Gastrocnemius medialis (tissue), 4 donors: ENCODE measurements at regions of chr9 and their contacts with region 1.

Region 1: DNA sequence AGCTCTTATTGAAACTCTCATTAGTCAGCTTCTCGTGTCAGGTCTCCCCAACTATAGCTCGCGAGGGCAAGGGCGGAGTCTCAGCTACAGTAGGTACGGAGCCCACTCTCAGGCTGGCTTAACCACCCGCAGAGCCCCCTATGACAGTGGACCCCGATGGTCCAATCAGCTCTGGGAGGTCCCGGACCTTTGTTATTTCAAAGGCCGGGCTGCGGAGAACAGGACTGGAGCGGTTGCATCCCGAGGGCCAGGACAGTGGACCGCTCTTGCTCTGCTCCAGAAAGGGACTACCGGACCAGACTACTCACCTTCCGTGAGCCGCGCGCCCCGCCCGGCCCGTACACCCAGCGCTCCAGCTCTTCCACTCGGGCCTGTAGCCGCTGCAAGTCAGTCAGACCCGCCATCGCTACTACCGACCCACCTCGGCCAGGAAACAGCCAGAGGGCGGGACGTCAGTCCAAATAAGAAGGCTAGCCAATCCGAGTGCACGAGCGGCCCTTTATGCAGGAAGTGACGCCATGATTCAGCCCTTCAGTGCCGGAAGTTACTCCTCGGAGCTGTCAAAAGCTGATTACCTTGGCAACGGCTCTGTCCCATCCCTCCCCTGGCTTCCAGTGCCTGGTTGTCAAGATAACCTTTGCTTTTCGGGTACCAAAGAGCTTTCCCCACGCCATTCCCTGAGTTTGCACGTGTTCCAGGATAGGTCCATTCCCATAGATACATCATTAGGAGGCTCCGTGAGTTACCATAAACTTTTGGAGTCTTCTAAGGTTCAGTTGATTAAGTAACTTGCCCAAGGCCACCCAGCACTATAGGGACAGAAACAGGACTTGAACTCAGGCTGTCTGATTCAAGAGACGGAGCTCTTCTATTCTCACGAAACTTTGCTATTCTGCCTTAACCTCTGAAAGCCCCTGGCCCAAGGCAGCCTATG is at the start of gene DCTN3:
- DNase-seq: peak; percentile 90 to 93
- ATAC-seq: peak; percentile 99 to 100
- H3K4me3 ChIP-seq: peak within 1 kb of the TSS; percentile 76 to 94 (median 93)
- H3K27ac ChIP-seq: peak within 1 kb of the TSS; percentile 44 to 71 (median 63)
- H3K4me1 ChIP-seq: peaks cover 8 to 15% of the 10 kb centered on the region in 2 donors
- H3K27me3 ChIP-seq: peaks cover 33 to 39% (median 37%) of the 10 kb centered on the region in 3 donors
- CTCF ChIP-seq: peak in 1 of 5 experiments; percentile 20
- POLR2A ChIP-seq: peak in 1 of 2 donors; percentile 24
- total RNA-seq, gene DCTN3: 62.8 to 174 (median 105) TPM

Region 2: DNA sequence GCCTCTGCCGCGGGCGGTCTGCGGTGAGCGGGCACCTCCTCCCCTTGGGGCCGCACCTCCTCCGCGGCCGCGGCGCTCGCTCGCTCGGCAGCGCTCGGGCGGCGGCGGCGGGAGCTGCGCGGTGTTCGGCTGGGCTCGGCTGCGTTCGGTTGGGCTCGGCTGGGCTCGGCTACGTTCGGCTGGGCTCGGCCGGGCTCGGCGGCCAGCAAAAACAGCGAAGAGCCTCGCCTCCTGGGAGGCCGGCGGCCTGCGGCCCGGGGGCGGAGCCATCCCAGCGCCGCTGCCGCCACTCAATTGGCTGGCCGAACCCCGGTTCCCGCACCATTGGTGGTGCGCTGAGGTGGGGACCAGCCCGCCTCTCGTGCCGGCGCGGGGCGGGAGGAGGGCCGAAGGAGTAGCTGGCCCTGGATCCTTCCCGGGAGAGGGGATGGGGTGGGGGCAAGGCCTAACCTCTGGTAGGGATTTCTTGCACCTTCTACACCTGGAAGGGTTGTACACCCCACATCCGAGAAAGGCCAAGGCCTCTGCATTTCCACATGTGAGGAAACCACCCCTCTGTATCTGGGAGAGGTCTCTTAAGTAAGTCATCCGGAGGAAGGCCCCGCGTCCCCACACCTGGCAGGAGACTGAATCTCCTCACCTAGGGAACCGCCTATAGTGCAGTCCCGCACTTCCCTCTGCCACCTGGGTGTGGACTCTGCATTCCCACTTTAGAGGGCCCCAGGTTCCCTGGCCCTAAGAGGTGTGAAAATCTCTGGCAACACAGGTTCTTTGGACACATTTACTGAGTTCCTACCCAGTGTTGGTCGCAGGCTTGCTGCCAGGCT is 97.1 kb before region 1 on chr9 and contains the start of gene ENHO:
- in situ Hi-C with region 1: loop called in 1 of 4 experiments (anchors 25 kb)
- intact Hi-C with region 1: no loop called
- DNase-seq: peak; percentile 58 to 79
- ATAC-seq: peak; percentile 91 to 94
- H3K4me3 ChIP-seq: peak within 1 kb of the TSS; percentile 43 to 61 (median 53)
- H3K27ac ChIP-seq: peak within 1 kb of the TSS in 2 of 4 donors; percentile 6 to 29
- H3K4me1 ChIP-seq: peaks cover 6 to 7% of the 10 kb centered on the region in 2 donors
- H3K27me3 ChIP-seq: no peaks in the 10 kb centered on the region
- CTCF ChIP-seq: peak in 1 of 5 experiments; percentile 27
- POLR2A ChIP-seq: no peak
- total RNA-seq, gene ENHO: 0.65 TPM in 1 of 4 donors, not detected in the others